PC-9 (cell line): ENCODE measurements at regions of chr18 and their contacts with region 1.

Region 1: DNA sequence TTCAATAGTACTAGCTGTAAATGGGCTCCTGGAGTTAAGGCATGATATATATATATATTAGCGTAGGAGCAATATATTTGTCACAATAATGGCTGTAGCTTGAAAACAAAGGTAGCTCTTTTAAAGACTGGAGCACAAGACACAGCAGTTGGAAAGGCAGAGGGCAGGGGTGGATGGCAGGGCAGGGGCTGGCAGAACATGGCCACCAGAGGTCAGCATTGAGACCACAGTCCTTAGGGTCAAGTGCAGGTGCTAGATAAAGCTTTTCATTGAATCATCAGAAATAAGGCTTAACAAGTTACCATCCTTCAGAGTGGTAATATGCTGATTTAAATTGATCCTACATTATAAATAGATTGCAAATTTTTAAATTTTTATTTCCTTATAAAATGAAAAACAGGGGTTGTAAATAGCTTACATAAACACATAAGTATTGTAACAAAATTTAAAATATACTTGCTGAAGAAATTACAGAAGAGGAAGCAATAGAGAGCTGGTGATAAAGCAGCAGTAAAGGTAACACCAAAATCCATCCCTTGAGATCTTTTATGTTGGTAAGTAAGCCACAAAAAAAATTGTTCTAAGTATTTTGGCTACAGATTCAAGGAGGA is 161.2 kb upstream of the PIEZO2 start:
- DNase-seq: peak in 1 of 2 experiments; percentile 40
- H3K4me3 ChIP-seq: no peak overlapping the region
- H3K27ac ChIP-seq: no peak overlapping the region
- H3K4me1 ChIP-seq: no peaks in the 10 kb centered on the region
- H3K27me3 ChIP-seq: peaks cover 29% of the 10 kb centered on the region
- CTCF ChIP-seq: peak; percentile 69

Region 2: GRCh38 chr18:11339188-11339775 is 28.7 kb after region 1 on chr18:
- CTCF ChIA-PET with region 1: no interaction called
- POLR2A ChIA-PET with region 1: no interaction called
- intact Hi-C with region 1: no loop called
- DNase-seq: no peak
- H3K4me3 ChIP-seq: no peak overlapping the region
- H3K27ac ChIP-seq: no peak overlapping the region
- H3K4me1 ChIP-seq: no peaks in the 10 kb centered on the region
- H3K27me3 ChIP-seq: peaks cover 14% of the 10 kb centered on the region; the same call in 1 of the 2 replicates
- CTCF ChIP-seq: no peak

Region 3: DNA sequence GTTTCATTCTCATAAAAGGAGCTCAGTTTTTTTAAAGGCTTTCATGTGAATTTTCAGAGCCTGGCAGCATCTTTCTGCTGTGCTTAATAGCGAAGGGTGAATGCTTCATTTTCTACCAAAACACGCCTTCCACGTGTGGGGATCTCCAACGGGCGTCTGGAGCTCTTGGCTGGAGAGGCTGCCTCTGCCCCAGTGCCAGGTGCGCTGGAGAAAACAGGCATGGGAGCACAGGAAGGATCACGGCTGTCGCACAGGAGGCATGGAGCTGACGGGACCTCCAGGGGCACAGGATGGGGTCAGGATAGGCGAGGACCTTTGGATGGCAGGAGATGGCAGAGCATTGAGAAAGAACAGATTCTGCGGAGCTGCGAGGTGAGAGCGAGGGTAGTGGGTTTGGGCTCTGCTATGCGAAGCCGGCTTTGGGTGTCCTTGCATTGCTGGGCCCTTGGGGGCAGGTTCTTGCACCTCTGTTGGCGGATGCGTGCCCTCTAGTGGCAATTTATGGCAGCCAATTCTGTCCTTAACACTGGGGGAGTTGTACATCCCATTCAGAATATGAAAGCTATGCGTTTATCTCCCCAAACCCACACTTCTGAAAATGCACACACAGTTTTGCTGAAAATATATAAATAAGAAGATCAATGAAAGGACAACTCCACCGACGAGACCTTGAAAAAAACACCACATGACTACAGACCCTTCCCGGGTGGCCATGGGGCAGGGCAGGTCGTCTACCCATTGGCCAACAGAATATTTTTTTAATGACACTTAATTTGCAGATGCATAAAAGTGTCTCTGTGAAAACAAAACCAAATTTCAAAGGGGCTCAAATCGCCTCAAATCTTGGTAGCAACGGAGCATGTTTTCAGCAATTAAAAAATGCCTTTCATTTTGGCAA is 208.5 kb after region 1 on chr18:
- CTCF ChIA-PET with region 1: no interaction called
- POLR2A ChIA-PET with region 1: no interaction called
- intact Hi-C with region 1: loop called (anchors 10 kb)
- DNase-seq: peak in 1 of 2 experiments; percentile 25
- H3K4me3 ChIP-seq: no peak overlapping the region
- H3K27ac ChIP-seq: no peak overlapping the region
- H3K4me1 ChIP-seq: no peaks in the 10 kb centered on the region
- H3K27me3 ChIP-seq: peaks cover 20% of the 10 kb centered on the region
- CTCF ChIP-seq: peak; percentile 68

Region 4: GRCh38 chr18:11529081-11529480 is 218.5 kb after region 1 on chr18:
- CTCF ChIA-PET with region 1: interaction called, 30 read pairs
- POLR2A ChIA-PET with region 1: no interaction called
- intact Hi-C with region 1: no loop called
- DNase-seq: no peak
- H3K4me3 ChIP-seq: no peak overlapping the region
- H3K27ac ChIP-seq: no peak overlapping the region
- H3K4me1 ChIP-seq: no peaks in the 10 kb centered on the region
- H3K27me3 ChIP-seq: peaks cover 81% of the 10 kb centered on the region
- CTCF ChIP-seq: no peak

Region 5: DNA sequence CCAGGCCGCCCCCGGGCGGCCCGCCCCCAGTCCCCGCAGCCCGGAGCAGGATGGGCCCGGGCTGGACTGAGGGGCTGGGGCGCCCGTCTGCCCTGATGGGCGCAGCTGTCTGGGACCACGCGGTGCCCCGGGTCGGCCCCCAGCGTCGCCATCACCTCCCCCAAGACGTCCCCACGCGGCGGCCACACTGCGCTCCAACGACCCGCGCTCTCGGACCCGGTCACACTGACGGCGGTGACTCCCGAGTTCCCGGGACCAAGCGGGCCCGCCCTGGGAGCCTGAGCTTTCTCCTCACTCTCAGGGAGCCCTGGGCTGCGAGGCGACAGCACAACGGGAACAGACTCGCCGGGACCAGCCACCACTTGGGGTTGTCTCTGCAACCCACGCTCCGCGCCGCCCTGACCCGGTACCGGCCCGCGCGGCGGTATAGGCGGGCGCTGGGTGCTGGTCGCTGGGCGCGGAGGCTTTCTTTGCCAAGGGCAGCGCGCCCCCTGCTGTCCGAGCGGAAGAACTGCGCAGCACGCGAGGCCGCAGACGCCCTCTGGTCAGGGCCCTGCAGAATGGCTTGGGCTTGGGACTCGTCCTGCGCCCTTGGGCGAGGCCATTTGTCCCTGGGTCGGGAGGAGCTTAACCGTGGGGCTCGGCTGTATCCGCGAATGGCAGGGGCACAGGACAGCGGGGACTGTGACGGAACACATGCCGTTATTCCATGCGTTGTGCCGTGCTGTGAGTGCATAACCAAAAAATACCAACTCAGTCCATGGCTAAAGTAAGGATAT is 728.2 kb after region 1 on chr18:
- CTCF ChIA-PET with region 1: interaction called, 4 read pairs
- POLR2A ChIA-PET with region 1: no interaction called
- intact Hi-C with region 1: loop called (anchors 10 kb)
- DNase-seq: peak; percentile 57 to 84
- H3K4me3 ChIP-seq: peak overlapping the region; percentile 60
- H3K27ac ChIP-seq: no peak overlapping the region
- H3K4me1 ChIP-seq: 0 out of 2 replicates have a peak, but pooled peaks cover 3% of the 10 kb centered on the region
- H3K27me3 ChIP-seq: no peaks in the 10 kb centered on the region
- CTCF ChIP-seq: peak; percentile 97